Naive thymus-derived CD8-positive, alpha-beta T cell (primary cell): ENCODE measurements at regions of chr12 and their contacts with region 1.

Region 1: DNA sequence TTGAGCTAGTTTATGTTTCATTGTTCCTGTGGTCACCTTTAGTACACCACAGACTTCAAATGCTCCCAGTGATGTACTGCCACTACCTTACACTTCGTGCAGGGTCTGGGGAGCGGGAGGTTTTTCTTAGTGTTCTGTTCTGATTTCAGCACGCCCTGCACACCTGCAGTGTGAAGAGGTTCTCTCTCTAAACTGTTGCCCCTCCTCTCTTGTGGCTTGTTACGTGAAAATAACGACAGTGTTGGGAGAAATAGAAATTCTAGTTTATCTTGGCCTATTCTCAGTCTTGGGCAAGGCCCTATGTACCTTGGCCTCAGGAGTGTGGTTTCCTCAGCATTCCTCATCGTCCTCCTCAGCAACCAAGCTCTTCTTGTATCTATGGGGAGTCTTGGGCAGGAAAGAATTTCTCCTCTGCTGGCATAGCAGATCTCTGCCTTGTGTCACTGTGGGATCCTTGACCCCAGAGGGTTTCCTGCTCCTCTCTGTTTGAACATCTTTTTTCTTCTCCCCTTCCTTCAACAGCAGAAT is 48.6 kb downstream of the EIF2S3B start:
- DNase-seq: peak; percentile 22 to 90 (median 82)
- ATAC-seq: peak; percentile 65 to 66
- H3K4me3 Mint-ChIP-seq: peak overlapping the region; percentile 84 to 99 (median 96)
- H3K27ac Mint-ChIP-seq: peak overlapping the region; percentile 95 to 100 (median 100)
- H3K4me1 Mint-ChIP-seq: peaks cover 30 to 61% (median 50%) of the 10 kb centered on the region in 4 donors
- H3K27me3 Mint-ChIP-seq: no peaks in the 10 kb centered on the region

Region 2: GRCh38 chr12:10364815-10365622 is 189.3 kb before region 1 on chr12:
- POLR2A ChIA-PET with region 1: interaction called, 56 read pairs
- DNase-seq: peak; percentile 29 to 87 (median 72)
- ATAC-seq: peak; percentile 57 to 67
- H3K4me3 Mint-ChIP-seq: no peak overlapping the region
- H3K27ac Mint-ChIP-seq: no peak overlapping the region
- H3K4me1 Mint-ChIP-seq: peaks cover 7 to 41% (median 34%) of the 10 kb centered on the region in 4 donors
- H3K27me3 Mint-ChIP-seq: no peaks in the 10 kb centered on the region

Region 3: DNA sequence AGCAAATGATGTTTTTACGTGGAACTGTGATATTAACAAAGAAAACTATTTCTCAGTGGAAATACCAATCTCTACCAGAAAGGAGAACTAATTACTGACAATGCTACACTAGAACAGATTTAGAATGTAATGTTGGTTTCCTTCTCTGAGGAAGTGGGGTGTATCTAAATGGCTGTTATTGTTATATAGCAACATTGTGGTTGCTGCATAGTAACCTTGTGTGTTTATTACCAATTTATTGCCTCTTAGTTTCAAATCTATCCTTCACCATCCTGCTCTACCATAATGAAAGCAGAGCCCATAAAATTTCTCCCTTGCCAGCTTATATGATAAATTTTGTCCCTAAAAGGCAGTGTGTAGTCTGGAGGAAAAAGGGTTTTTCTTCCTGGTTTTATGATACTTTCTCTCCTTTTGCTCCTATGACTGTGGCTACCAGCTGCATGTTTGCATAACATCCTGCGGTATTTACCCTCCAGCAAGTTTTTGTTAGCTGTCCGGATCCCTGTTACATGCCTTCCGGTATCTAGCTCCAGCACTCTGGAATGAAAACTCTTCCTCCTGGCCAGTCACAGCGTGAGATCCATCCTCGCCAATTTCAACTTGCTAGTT is 158.8 kb before region 1 on chr12:
- POLR2A ChIA-PET with region 1: interaction called, 35 read pairs
- DNase-seq: peak in 6 of 10 donors; percentile 43 to 87 (median 69)
- ATAC-seq: peak; percentile 71 to 80
- H3K4me3 Mint-ChIP-seq: peak overlapping the region; percentile 63 to 91 (median 83)
- H3K27ac Mint-ChIP-seq: peak overlapping the region; percentile 97 to 100 (median 99)
- H3K4me1 Mint-ChIP-seq: peaks cover 35 to 78% (median 70%) of the 10 kb centered on the region in 4 donors
- H3K27me3 Mint-ChIP-seq: no peaks in the 10 kb centered on the region

Region 4: GRCh38 chr12:10505620-10506019 is 48.7 kb before region 1 on chr12 and contains the start of gene EIF2S3B:
- POLR2A ChIA-PET with region 1: interaction called, 14 read pairs
- DNase-seq: no peak
- ATAC-seq: no peak
- H3K4me3 Mint-ChIP-seq: no peak within 1 kb of the TSS
- H3K27ac Mint-ChIP-seq: peak within 1 kb of the TSS in 8 of 10 donors; percentile 15 to 78 (median 42)
- H3K4me1 Mint-ChIP-seq: peaks cover 12 to 28% (median 24%) of the 10 kb centered on the region in 4 donors
- H3K27me3 Mint-ChIP-seq: no peaks in the 10 kb centered on the region
- polyA plus RNA-seq, gene EIF2S3B: 0.30 to 0.88 (median 0.82) TPM

Region 5: GRCh38 chr12:10584415-10584814 is 30.1 kb after region 1 on chr12:
- POLR2A ChIA-PET with region 1: no interaction called
- DNase-seq: no peak
- ATAC-seq: no peak
- H3K4me3 Mint-ChIP-seq: no peak overlapping the region
- H3K27ac Mint-ChIP-seq: peak overlapping the region in 1 of 10 donors; percentile 63
- H3K4me1 Mint-ChIP-seq: peaks cover 0 to 2% (median 0%) of the 10 kb centered on the region in 4 donors
- H3K27me3 Mint-ChIP-seq: no peaks in the 10 kb centered on the region

Region 6: GRCh38 chr12:10613349-10614055 is 59.2 kb after region 1 on chr12 and contains the start of gene MAGOHB:
- POLR2A ChIA-PET with region 1: interaction called, 15 read pairs
- DNase-seq: peak; percentile 95 to 100 (median 98)
- ATAC-seq: peak; percentile 93 to 95
- H3K4me3 Mint-ChIP-seq: peak within 1 kb of the TSS; percentile 98 to 100 (median 99)
- H3K27ac Mint-ChIP-seq: peak within 1 kb of the TSS; percentile 99 to 100 (median 100)
- H3K4me1 Mint-ChIP-seq: peaks cover 18 to 37% (median 29%) of the 10 kb centered on the region in 4 donors
- H3K27me3 Mint-ChIP-seq: peaks cover 0 to 7% (median 2%) of the 10 kb centered on the region in 5 donors
- polyA plus RNA-seq, gene MAGOHB: 44.1 to 77.3 (median 53.9) TPM